ENCODE measurements at regions of chr20 and their contacts with region 1.

Region 1: GRCh38 chr20:40962730-40963504 is 65.7 kb upstream of the TOP1 start:
- DNase-seq: peak; percentile 82
- H3K4me3 Mint-ChIP-seq: no peak overlapping the region
- H3K27ac Mint-ChIP-seq: no peak overlapping the region
- H3K4me1 Mint-ChIP-seq: peaks cover 9% of the 10 kb centered on the region
- H3K27me3 Mint-ChIP-seq: no peaks in the 10 kb centered on the region

Region 2: DNA sequence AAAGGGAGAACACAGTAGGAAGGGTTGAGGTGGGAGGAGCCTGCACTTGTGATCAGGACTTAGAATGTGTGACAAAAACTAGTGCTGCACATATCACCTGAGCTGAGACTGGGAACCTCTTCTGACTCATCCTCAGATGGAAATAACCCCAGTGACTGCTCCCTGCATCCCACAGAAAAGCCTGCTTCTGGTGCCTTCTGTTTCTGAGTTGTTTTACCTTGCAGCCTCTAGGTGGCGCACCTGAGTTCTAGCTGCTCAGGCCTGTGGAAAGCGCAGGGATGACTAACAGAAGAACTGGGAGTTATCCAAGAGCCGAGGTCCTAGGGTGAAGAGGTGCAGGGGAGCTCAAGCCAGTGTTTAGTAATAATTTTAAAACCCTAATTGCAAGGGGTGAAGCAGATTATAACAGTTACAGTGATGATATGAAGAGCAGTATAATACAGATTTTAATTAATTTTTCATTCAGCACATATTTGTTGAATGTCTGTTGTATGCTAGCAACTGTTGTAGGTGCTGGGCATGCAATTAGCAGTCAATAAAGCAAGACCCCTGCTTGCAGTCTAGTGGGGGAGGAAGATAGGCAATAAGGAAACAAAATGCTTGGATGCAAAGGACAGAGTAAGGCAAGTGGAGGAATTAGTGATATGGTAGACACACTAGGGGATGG is 1698.3 kb before region 1 on chr20:
- CTCF ChIA-PET with region 1: interaction called, 13 read pairs
- POLR2A ChIA-PET with region 1: no interaction called
- intact Hi-C with region 1: no loop called
- DNase-seq: peak; percentile 56
- H3K4me3 Mint-ChIP-seq: no peak overlapping the region
- H3K27ac Mint-ChIP-seq: no peak overlapping the region
- H3K4me1 Mint-ChIP-seq: no peaks in the 10 kb centered on the region
- H3K27me3 Mint-ChIP-seq: peaks cover 4% of the 10 kb centered on the region

Region 3: DNA sequence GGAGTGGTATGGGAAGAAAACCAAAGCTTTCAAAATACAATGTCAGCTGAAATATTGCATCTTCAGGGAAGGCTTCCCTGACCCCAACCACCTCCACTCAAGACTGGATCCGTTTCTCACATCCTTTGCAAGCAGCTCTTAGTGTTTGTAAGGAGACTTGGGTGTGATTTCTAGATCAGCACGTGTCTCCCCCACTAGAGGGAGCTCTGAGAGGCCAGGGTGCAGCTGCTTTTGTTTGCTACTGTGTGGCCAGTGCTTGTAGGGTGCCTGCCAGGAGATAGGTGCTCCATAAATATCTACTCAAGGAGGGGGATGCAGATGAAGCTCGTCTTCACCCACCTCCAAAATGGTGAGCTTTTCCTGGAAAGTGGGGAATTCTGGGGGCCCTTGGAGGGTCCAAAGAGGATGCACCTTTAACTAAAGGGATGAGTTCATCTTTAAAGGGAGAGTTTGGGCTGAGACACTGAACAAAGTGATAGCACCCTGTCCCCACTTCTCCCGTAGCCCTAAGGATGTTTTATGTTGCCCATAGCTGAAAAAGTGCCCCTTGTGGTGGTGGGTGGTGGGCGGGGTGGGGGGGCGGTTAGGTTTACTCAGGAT is 221.3 kb before region 1 on chr20:
- CTCF ChIA-PET with region 1: interaction called, 128 read pairs
- POLR2A ChIA-PET with region 1: no interaction called
- intact Hi-C with region 1: loop called (anchors 1 kb)
- DNase-seq: peak; percentile 58
- H3K4me3 Mint-ChIP-seq: no peak overlapping the region
- H3K27ac Mint-ChIP-seq: no peak overlapping the region
- H3K4me1 Mint-ChIP-seq: no peaks in the 10 kb centered on the region
- H3K27me3 Mint-ChIP-seq: no peaks in the 10 kb centered on the region

Region 4: GRCh38 chr20:41086402-41087338 is 123.8 kb after region 1 on chr20:
- CTCF ChIA-PET with region 1: interaction called, 139 read pairs
- POLR2A ChIA-PET with region 1: no interaction called
- intact Hi-C with region 1: no loop called
- DNase-seq: no peak
- H3K4me3 Mint-ChIP-seq: no peak overlapping the region
- H3K27ac Mint-ChIP-seq: peak overlapping the region; percentile 28
- H3K4me1 Mint-ChIP-seq: peaks cover 17% of the 10 kb centered on the region
- H3K27me3 Mint-ChIP-seq: no peaks in the 10 kb centered on the region

Region 5: DNA sequence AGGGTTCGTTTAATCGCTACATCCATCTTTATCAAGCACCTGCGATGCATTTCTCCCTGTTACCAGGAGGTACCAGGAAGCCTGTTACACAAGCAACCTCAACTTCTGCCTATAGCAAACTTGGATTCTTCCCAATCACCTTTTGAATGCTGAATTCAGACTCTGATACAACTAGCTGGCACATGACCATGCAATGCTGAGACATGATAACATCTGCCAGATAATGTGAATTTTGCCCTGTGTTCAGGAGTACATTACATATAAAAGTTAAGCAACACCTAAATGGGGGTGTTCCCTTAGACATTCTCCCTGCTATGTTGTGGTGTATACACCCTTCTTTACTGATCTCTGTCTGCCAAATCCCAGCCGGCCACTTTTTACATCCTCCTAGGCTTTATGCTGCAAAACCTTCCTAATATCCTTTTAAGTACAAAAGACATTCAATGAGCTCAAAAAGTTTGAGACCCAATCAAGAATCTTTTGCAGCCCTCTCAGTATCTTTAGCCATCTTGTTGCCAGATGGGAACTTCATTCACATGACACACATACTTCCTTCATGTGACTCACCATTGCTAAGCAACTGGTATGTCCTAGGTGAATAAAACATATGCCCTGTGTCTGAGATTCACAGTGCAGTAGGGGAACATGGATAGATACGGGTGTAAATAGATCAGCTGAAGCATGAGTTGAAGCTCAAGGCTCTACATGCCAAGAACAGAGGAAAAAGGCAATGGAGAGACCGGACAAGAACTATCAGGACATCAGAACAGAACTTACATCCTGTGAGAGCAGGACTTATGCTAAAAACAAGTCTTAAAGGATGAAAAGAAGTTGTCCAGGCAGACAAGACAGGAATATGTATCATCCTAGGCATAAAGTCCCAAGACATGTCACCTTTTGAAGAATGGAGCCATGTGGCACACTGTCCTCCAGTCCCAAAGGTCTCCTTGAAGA is 270.3 kb after region 1 on chr20:
- CTCF ChIA-PET with region 1: interaction called, 15 read pairs
- POLR2A ChIA-PET with region 1: no interaction called
- intact Hi-C with region 1: loop called (anchors 1 kb)
- DNase-seq: no peak
- H3K4me3 Mint-ChIP-seq: no peak overlapping the region
- H3K27ac Mint-ChIP-seq: no peak overlapping the region
- H3K4me1 Mint-ChIP-seq: peaks cover 20% of the 10 kb centered on the region
- H3K27me3 Mint-ChIP-seq: no peaks in the 10 kb centered on the region

Region 6: GRCh38 chr20:41693136-41693979 is 730.4 kb after region 1 on chr20:
- CTCF ChIA-PET with region 1: no interaction called
- POLR2A ChIA-PET with region 1: no interaction called
- intact Hi-C with region 1: loop called (anchors 10 kb)
- DNase-seq: peak; percentile 87
- H3K4me3 Mint-ChIP-seq: peak overlapping the region; percentile 90
- H3K27ac Mint-ChIP-seq: peak overlapping the region; percentile 92
- H3K4me1 Mint-ChIP-seq: peaks cover 18% of the 10 kb centered on the region
- H3K27me3 Mint-ChIP-seq: peaks cover 2% of the 10 kb centered on the region